Ascending aorta (tissue), 2 donors: ENCODE measurements at regions of chr1 and their contacts with region 1.

Region 1: DNA sequence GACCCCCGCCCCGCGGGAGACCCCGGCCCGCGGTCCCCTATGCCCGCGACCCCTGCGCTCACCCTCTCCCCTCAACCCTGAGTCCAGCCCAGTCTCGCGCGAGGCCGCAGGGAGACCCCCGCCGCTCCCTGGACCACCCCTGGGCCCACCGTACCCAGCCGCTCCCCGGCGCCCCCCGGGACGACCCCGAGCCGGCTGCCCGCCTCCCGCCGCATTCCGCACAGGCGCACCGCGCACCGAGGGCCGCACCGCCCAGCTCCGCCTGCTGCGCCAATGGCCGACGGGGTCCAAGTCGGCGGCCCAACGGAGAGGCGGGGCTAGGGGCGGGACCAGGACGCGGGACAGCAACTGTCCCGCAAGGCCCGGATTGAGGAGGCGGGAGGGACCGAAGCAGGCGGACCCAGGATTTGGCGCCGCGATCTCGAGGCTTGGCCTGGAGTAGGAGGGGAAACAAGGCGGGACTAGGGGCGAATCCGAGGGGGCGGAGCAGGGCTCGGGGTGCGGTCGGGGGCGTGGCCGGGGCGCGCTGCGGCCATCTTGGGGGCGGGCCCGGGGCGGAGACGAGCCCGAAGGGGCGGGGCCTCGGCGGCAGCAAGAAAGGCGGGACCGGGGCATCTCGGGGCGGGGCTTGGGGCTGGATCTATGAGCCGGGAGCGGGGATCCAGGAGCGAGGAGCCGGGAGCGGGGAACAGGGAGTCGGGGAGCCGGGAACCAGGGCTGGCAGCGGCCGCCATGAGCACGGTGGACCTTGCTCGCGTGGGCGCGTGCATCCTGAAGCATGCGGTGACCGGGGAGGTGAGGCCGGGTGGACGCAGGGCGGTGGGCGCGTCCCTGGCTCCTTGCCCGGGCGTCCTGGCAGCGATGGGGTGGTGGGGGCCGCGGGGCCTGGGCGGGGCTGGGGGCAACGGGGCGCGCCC is at the start of gene PRXL2B:
- DNase-seq: peak; percentile 95 to 99
- H3K4me3 ChIP-seq: peak within 1 kb of the TSS; percentile 79 to 85
- H3K27ac ChIP-seq: peak within 1 kb of the TSS; percentile 91 to 94
- H3K4me1 ChIP-seq: peaks cover 13 to 14% of the 10 kb centered on the region in 2 donors
- H3K27me3 ChIP-seq: no peaks in the 10 kb centered on the region
- CTCF ChIP-seq: no peak
- total RNA-seq, gene PRXL2B: 20.1 TPM

Region 2: GRCh38 chr1:2391041-2391930 is 195.1 kb before region 1 on chr1 and contains the starts of genes MORN1 and RER1:
- intact Hi-C with region 1: loop called (anchors 1 kb)
- DNase-seq: peak; percentile 94 to 99
- H3K4me3 ChIP-seq: peak within 1 kb of the TSS; percentile 81 to 86
- H3K27ac ChIP-seq: peak within 1 kb of the TSS; percentile 84 to 86
- H3K4me1 ChIP-seq: peaks cover 4 to 18% of the 10 kb centered on the region in 2 donors
- H3K27me3 ChIP-seq: no peaks in the 10 kb centered on the region
- CTCF ChIP-seq: no peak
- total RNA-seq, gene MORN1: 18.4 TPM
- total RNA-seq, gene RER1: 61.3 TPM

Region 3: GRCh38 chr1:2525920-2526823 is 60.2 kb before region 1 on chr1 and contains the start of gene PANK4:
- intact Hi-C with region 1: loop called (anchors 1 kb)
- DNase-seq: peak; percentile 68 to 96
- H3K4me3 ChIP-seq: peak within 1 kb of the TSS; percentile 75 to 80
- H3K27ac ChIP-seq: peak within 1 kb of the TSS; percentile 66 to 68
- H3K4me1 ChIP-seq: peaks cover 36 to 54% of the 10 kb centered on the region in 2 donors
- H3K27me3 ChIP-seq: no peaks in the 10 kb centered on the region
- CTCF ChIP-seq: no peak
- total RNA-seq, gene PANK4: 80.5 TPM

Region 4: DNA sequence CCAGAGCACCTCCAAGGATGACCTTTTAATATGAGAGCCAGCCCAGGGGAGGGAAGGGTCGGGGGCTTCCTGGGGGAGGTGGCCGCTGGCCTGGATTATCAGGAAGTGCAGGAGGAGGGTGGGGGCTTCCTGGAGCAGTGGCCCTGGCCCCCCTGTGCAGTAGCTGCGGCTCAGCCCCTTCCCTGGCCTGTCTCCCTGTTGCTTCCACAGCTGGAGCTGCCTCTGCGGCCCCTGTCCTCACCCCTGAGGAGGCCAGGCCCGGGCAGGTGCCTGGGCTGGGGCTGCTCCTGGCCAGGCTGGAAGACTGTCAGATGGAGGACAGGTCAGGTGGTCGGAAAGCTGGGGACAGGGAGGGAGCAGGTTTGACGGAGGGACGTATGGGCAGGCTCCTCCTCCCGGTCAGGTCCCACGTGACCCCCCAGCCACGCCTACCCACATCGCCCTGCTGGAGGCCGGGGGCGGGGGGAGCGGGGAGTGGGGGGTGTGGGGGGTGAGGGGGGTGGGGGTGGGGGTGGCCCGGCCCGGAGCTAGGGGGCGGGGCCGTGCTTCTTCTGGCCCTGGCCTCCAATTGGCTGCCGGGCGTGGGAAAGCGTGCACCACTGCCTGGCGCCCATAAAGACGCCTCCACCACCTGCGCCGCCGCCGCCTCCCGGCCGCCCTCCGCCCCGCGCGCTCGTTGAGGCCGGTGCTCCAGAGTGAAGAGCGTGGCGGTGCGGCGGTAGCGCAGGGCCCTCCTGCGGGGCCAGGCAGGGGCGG is 40.5 kb before region 1 on chr1:
- intact Hi-C with region 1: loop called (anchors 1 kb)
- DNase-seq: peak; percentile 71 to 91
- H3K4me3 ChIP-seq: peak overlapping the region; percentile 53 to 67
- H3K27ac ChIP-seq: peak overlapping the region; percentile 92 to 95
- H3K4me1 ChIP-seq: peaks cover 13 to 36% of the 10 kb centered on the region in 2 donors
- H3K27me3 ChIP-seq: no peaks in the 10 kb centered on the region
- CTCF ChIP-seq: no peak

Region 5: DNA sequence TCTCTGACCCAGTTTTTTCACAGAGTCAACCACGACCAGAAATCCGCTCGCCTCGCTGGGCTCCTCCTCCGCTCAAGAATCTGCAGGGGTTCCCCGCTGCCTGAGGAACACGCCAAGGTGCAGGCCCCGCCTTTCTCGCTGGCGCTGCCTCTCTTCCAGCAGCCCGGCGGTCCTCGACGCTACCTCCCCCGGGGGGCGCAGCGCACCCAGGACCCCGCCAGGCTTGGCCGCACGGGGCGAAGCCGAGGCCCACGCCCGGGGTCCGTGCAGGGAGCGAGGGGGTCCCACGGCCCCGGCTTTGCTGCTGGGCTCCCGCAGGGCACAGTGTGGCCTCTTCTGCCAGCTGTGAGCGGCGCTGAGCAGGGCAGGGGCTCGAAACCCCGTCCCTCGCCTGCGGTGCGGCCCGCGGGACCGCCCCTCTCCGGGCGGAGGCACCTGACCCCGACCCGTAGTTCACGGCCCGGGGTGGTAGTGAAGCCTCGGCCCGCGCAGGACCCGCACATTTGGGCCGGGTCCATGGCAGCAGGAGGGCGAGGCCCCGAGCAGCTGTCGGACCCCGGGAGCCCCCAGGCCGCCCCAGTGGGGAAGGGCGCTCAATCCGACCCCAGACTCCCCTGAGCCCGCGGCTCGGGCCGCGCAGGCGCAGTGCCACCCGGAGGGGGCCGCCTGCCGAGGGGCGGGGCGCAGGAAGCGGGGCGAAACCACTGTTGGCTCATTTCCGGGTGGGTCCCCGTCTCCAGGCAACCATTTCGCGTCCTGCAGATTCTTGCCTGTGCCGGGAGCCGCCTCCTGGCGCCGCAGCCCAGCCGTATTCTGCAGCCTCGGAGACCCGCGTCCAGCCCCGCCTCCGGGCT is 56.4 kb after region 1 on chr1:
- intact Hi-C with region 1: loop called (anchors 2 kb)
- DNase-seq: peak; percentile 64 to 92
- H3K4me3 ChIP-seq: peak overlapping the region; percentile 74 to 86
- H3K27ac ChIP-seq: peak overlapping the region; percentile 45 to 48
- H3K4me1 ChIP-seq: peaks cover 8 to 18% of the 10 kb centered on the region in 2 donors
- H3K27me3 ChIP-seq: no peaks in the 10 kb centered on the region
- CTCF ChIP-seq: peak in 1 of 3 experiments; percentile 5

Region 6: DNA sequence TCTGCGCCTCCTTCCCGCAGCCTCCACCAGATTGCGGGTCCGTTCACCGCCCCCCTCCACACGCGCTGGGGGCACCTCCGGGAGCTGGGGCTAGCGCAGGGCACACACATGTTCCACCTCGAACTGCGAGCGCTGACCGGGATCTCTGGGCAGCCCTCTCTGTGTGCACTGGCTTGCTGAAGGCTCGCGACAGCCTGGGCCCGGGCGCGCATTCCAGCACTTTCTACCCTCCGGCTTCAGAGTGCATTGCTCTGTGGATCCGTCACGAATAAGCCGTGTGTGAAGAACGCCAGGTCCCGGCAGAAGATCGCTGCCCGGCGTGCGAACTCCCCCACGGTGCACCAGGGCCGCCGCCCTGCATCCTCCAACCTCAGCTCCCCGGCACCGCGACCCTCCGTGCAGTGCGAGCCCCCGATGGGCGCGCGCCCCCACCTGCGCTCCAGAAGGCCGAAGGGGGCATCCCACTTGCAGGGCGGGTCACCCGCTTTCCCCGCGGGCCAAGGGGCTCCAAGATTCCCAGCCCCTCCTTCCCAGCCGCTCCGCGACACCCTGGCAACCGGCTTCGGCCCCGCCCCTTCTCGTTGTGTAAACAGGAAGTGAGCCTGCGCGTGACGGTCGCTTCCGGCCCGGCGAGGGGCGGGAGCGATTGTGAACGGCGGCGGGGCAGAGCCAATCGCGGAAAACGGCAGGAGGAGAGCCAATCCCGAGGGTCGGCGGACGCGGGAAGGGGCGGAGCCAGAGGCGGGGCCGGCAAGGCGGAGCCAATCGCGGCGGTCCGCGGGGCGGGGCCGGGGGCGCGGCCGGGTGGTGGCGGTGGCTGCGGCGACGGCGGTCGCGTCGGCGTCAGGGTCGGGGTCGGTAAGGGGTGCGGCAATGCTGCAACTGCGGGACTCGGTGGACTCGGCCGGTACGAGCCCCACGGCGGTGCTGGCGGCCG is 1038.1 kb after region 1 on chr1 and contains the start of gene TPRG1L:
- intact Hi-C with region 1: loop called (anchors 10 kb)
- DNase-seq: peak; percentile 88 to 99
- H3K4me3 ChIP-seq: peak within 1 kb of the TSS; percentile 67 to 97
- H3K27ac ChIP-seq: peak within 1 kb of the TSS; percentile 62 to 65
- H3K4me1 ChIP-seq: peaks cover 11 to 15% of the 10 kb centered on the region in 2 donors
- H3K27me3 ChIP-seq: no peaks in the 10 kb centered on the region
- CTCF ChIP-seq: no peak
- total RNA-seq, gene TPRG1L: 18.9 TPM

Region 7: GRCh38 chr1:3900119-3900968 is 1313.9 kb after region 1 on chr1 and contains the start of gene C1orf174:
- intact Hi-C with region 1: loop called (anchors 5 kb)
- DNase-seq: peak; percentile 92 to 98
- H3K4me3 ChIP-seq: peak within 1 kb of the TSS; percentile 86 to 95
- H3K27ac ChIP-seq: peak within 1 kb of the TSS; percentile 95 to 98
- H3K4me1 ChIP-seq: peaks cover 3 to 7% of the 10 kb centered on the region in 2 donors
- H3K27me3 ChIP-seq: no peaks in the 10 kb centered on the region
- CTCF ChIP-seq: no peak
- total RNA-seq, gene C1orf174: 14.9 TPM